A673 (cell line): ENCODE measurements at regions of chr3 and their contacts with region 1.

Region 1: DNA sequence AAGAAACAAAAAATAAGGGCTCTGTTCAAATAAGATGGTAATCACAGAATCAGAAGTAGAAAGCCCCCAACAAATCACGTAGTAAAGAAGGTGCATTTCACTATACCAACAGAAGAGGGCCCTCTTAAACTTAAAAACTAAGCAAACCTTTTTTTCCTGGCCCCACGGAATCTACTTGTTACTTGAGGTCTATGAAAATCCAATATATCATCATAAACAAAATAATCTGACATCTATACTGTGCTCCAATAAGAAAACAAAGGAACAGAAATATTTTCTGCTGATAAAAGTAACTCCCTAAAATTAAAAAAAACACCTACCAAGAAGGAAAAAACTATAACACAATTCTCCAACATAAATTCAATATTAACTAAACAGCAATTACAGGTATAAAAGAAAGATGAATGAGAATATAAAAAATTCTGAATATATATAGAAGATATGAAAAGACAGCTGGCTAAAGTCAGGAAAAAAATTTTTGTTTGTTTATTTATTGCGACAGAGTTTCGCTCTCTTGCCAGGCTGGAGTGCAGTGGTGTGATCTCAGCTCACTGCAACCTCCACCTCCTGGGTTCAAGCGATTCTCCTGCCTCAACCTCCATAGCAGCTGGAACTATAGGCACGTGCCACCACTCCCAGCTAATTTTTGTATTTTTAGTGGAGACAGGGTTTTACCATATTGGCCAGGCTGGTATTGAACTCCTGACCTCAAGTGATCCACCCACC is 81.8 kb downstream of the CLASP2 start:
- DNase-seq: peak; percentile 78
- H3K4me3 ChIP-seq: no peak overlapping the region
- H3K27ac ChIP-seq: no peak overlapping the region
- H3K4me1 ChIP-seq: no peaks in the 10 kb centered on the region
- H3K27me3 ChIP-seq: no peaks in the 10 kb centered on the region
- CTCF ChIP-seq: peak; percentile 71

Region 2: GRCh38 chr3:33388374-33389100 is 247.8 kb before region 1 on chr3:
- CTCF ChIA-PET with region 1: interaction called, 13 read pairs
- POLR2A ChIA-PET with region 1: no interaction called
- intact Hi-C with region 1: no loop called
- DNase-seq: peak; percentile 12
- H3K4me3 ChIP-seq: no peak overlapping the region
- H3K27ac ChIP-seq: no peak overlapping the region
- H3K4me1 ChIP-seq: peaks cover 9% of the 10 kb centered on the region
- H3K27me3 ChIP-seq: no peaks in the 10 kb centered on the region
- CTCF ChIP-seq: no peak

Region 3: DNA sequence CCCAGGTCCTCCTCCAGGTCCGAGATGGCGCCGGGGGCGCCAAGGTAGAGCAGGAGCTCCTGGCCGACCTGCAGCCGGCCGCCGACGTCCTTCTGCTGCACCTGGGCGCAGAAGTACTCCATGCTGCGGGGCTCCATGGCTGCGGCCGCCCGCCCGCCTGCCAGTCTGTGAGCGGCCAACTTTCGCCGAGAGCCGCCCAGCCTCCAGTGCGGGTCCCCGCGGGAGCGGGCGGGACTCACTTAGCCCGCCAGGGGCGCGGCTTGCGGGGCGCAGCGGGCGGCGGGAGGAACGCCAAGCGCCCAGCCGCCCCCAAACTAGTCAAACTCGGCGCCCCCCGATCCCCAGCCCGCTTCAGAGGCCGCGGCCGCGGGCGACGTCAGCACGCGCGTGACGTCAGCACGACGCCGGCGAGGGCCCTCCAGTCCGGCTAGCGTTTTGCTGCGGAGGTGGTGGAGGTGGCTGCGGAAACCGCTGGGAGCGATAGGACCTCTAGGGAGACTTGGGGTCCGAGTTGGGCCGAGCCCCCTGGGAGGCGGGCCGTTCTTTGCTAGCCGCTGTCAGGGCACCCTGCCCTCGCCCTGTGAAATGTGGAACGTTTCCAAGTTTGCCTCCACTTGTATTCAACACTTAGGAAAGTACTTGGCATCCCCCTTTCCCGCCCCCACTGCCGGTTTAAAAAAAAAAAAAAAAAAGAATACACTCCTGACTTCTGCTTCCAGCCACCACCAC is 81.7 kb after region 1 on chr3 and contains the start of gene CLASP2:
- CTCF ChIA-PET with region 1: no interaction called
- POLR2A ChIA-PET with region 1: no interaction called
- intact Hi-C with region 1: loop called (anchors 2 kb)
- DNase-seq: peak; percentile 94
- H3K4me3 ChIP-seq: peak within 1 kb of the TSS; percentile 80
- H3K27ac ChIP-seq: peak within 1 kb of the TSS; percentile 95
- H3K4me1 ChIP-seq: peaks cover 17% of the 10 kb centered on the region
- H3K27me3 ChIP-seq: no peaks in the 10 kb centered on the region
- CTCF ChIP-seq: no peak
- total RNA-seq, gene CLASP2: 67.4 and 74.6 TPM in 2 replicates

Region 4: DNA sequence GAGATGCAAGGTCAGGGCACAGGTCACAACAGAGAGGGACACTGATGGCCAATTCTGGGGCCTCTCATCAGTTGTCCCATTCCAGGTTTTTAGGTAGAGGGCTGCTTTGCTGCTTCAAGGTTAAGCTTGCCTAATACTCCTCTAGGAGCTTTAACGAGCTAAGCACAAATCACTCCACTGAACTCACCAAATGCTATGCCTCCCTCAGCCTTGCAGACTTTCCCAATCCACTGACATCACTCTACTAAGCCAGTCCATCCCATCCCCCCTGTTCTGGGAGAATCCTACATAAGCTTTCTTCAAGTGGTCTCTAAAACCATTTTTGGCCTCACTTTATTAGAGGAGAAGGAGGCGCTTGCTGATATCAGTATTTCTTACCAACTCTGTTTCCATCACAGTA is 137.3 kb after region 1 on chr3:
- CTCF ChIA-PET with region 1: interaction called, 3 read pairs
- POLR2A ChIA-PET with region 1: no interaction called
- intact Hi-C with region 1: loop called (anchors 1 kb)
- DNase-seq: no peak
- H3K4me3 ChIP-seq: no peak overlapping the region
- H3K27ac ChIP-seq: no peak overlapping the region
- H3K4me1 ChIP-seq: no peaks in the 10 kb centered on the region
- H3K27me3 ChIP-seq: no peaks in the 10 kb centered on the region
- CTCF ChIP-seq: no peak